ENCODE measurements at regions of chr15 and their contacts with region 1.

Region 1: DNA sequence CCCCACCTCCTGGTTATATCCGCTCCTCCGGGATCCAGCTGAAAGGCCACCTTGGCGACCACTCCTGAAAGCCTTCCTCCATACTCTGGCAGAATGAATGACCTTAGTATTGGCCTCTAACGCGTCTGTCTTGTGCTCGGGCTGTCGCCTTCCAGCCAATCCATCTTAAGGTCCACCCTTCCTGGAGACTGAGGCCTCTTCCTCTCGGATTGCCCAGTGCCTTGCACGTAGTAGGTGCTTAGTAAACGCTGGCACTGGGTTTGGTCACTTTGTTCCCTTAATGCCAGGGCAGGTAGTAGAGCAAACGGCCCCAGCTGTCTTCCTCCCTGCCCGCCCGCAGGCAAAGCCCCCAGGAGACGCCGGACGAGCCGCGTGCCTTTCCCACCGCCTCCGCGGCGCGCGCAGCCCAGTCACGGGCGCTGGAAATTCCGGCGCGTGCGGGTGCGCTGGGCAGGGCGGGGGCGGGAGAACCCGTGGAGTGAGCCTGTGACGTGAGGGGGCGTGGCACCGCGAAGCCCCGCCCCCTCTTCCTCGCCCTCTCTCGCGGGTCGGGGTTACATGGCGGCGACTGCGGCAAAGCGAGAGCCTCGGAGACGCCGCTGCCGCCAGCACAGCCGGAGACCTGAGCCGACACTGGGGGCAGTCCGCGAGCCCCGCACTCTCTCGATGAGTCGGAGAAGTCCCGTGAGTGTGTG is at the start of gene MAPK6:
- DNase-seq: peak; percentile 89 to 98 (median 92)
- ATAC-seq: peak; percentile 87
- H3K4me3 ChIP-seq: peak within 1 kb of the TSS; percentile 74 to 84
- H3K4me3 Mint-ChIP-seq: peak within 1 kb of the TSS; percentile 97
- H3K27ac ChIP-seq: peak within 1 kb of the TSS; percentile 74 to 84
- H3K27ac Mint-ChIP-seq: peak within 1 kb of the TSS; percentile 99
- H3K4me1 ChIP-seq: peaks cover 29% of the 10 kb centered on the region
- H3K4me1 Mint-ChIP-seq: peaks cover 35% of the 10 kb centered on the region
- H3K27me3 ChIP-seq: no peaks in the 10 kb centered on the region
- H3K27me3 Mint-ChIP-seq: no peaks in the 10 kb centered on the region
- CTCF ChIP-seq: no peak
- total RNA-seq, gene MAPK6: 39.8 to 42.5 TPM

Region 2: DNA sequence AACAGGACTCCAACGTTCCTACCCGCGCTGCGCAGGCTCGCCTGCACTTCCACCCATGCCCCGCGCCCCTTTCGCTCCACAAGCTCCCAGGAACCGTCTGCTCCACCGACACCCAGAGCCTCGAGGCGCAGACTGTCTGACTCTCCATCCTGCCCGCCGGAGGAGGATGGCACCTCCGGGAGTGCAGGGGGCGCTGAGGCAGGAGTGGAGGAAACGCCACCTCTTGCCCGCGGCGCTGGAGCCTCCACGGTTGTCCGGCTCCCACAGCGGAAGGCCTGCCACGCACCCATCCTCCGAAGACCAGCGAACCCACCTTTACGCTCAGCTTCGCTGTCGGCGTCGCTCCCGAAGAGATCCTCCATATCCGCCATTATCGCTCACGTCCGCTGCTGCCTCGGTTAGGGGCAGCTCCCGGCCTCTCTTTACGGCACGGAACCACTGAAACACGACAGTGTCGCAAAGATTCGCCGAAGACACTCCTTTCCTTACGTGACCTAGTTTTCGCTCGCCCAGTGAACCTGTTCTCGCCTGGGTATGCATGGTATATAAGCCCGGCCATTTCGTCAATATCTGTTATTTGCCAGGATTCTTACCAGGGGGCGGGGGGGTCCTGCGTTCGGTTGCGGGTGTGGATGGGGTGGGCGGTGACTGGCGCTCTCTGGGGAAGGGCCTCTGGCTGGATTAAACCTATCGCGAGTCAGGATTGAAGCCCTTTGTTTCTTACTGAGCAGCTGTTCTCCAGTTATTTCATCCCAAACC is 47.3 kb before region 1 on chr15 and contains the start of gene LEO1:
- CTCF ChIA-PET with region 1: no interaction called
- POLR2A ChIA-PET with region 1: interaction called, 20 read pairs
- intact Hi-C with region 1: loop called (anchors 1 kb)
- DNase-seq: peak; percentile 72 to 97 (median 88)
- ATAC-seq: peak; percentile 91
- H3K4me3 ChIP-seq: peak within 1 kb of the TSS; percentile 85 to 99
- H3K4me3 Mint-ChIP-seq: peak within 1 kb of the TSS; percentile 99
- H3K27ac ChIP-seq: peak within 1 kb of the TSS; percentile 69 to 87
- H3K27ac Mint-ChIP-seq: peak within 1 kb of the TSS; percentile 99
- H3K4me1 ChIP-seq: peaks cover 13% of the 10 kb centered on the region
- H3K4me1 Mint-ChIP-seq: peaks cover 21% of the 10 kb centered on the region
- H3K27me3 ChIP-seq: no peaks in the 10 kb centered on the region
- H3K27me3 Mint-ChIP-seq: no peaks in the 10 kb centered on the region
- CTCF ChIP-seq: peak; percentile 26
- total RNA-seq, gene LEO1: 9.4 TPM

Region 3: GRCh38 chr15:52039925-52040781 is 21.3 kb after region 1 on chr15:
- CTCF ChIA-PET with region 1: interaction called, 3 read pairs
- POLR2A ChIA-PET with region 1: interaction called, 19 read pairs
- intact Hi-C with region 1: loop called (anchors 1 to 2 kb)
- DNase-seq: no peak
- ATAC-seq: no peak
- H3K4me3 ChIP-seq: no peak overlapping the region
- H3K4me3 Mint-ChIP-seq: no peak overlapping the region
- H3K27ac ChIP-seq: peak overlapping the region in 1 of 2 experiments; percentile 24
- H3K27ac Mint-ChIP-seq: peak overlapping the region; percentile 69
- H3K4me1 ChIP-seq: peaks cover 31% of the 10 kb centered on the region
- H3K4me1 Mint-ChIP-seq: peaks cover 65% of the 10 kb centered on the region
- H3K27me3 ChIP-seq: no peaks in the 10 kb centered on the region
- H3K27me3 Mint-ChIP-seq: no peaks in the 10 kb centered on the region
- CTCF ChIP-seq: no peak

Region 4: GRCh38 chr15:52050416-52050815 is 31.6 kb after region 1 on chr15:
- CTCF ChIA-PET with region 1: interaction called, 10 read pairs
- POLR2A ChIA-PET with region 1: interaction called, 19 read pairs
- intact Hi-C with region 1: loop called (anchors 1 kb)
- DNase-seq: no peak
- ATAC-seq: no peak
- H3K4me3 ChIP-seq: no peak overlapping the region
- H3K4me3 Mint-ChIP-seq: no peak overlapping the region
- H3K27ac ChIP-seq: no peak overlapping the region
- H3K27ac Mint-ChIP-seq: no peak overlapping the region
- H3K4me1 ChIP-seq: peaks cover 10% of the 10 kb centered on the region
- H3K4me1 Mint-ChIP-seq: peaks cover 24% of the 10 kb centered on the region
- H3K27me3 ChIP-seq: no peaks in the 10 kb centered on the region
- H3K27me3 Mint-ChIP-seq: no peaks in the 10 kb centered on the region
- CTCF ChIP-seq: no peak

Region 5: DNA sequence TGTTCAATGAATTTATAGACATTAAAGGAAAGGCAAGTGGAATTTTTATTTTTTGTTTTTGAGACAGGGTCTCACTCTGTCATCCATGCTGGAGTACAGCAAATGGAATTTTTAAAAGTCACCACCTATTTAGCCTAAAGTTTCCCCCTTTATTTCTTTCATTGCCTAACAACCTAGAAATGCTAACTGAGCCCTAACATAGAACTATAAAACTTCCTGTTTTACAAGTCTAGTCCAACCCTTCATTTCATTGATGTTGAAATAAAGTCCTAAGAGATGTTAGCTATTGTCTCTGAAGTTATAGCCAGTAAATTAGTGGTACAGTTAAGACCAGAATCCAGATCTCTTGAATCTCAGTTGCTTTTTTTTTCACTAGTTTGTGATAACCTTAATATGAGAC is 39.2 kb after region 1 on chr15:
- CTCF ChIA-PET with region 1: no interaction called
- POLR2A ChIA-PET with region 1: no interaction called
- intact Hi-C with region 1: loop called in 1 of 2 experiments (anchors 5 kb)
- DNase-seq: no peak
- ATAC-seq: no peak
- H3K4me3 ChIP-seq: no peak overlapping the region
- H3K4me3 Mint-ChIP-seq: no peak overlapping the region
- H3K27ac ChIP-seq: no peak overlapping the region
- H3K27ac Mint-ChIP-seq: no peak overlapping the region
- H3K4me1 ChIP-seq: no peaks in the 10 kb centered on the region
- H3K4me1 Mint-ChIP-seq: peaks cover 1% of the 10 kb centered on the region
- H3K27me3 ChIP-seq: no peaks in the 10 kb centered on the region
- H3K27me3 Mint-ChIP-seq: no peaks in the 10 kb centered on the region
- CTCF ChIP-seq: no peak

Region 6: DNA sequence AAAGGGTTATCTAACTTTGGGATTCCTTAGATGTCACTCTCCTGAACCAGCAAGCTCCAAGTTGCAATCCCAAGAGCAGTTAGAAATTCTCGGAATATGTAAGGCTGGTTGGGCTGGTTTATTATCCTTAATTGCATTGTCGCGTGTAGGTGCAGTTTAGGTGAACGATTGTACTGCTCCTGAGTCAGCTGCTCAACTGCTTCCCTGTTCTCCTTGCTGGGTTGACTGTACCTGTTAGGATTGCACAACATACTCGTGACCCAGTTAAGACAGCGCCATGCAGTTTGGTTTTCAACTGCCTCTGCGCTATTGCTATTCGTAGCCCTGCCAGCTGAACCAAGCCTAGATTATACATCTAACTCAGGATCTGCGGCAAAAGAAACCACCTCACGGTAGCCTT is 52.7 kb after region 1 on chr15:
- CTCF ChIA-PET with region 1: no interaction called
- POLR2A ChIA-PET with region 1: no interaction called
- intact Hi-C with region 1: no loop called
- DNase-seq: no peak
- ATAC-seq: no peak
- H3K4me3 ChIP-seq: no peak overlapping the region
- H3K4me3 Mint-ChIP-seq: no peak overlapping the region
- H3K27ac ChIP-seq: no peak overlapping the region
- H3K27ac Mint-ChIP-seq: no peak overlapping the region
- H3K4me1 ChIP-seq: no peaks in the 10 kb centered on the region
- H3K4me1 Mint-ChIP-seq: peaks cover 12% of the 10 kb centered on the region
- H3K27me3 ChIP-seq: no peaks in the 10 kb centered on the region
- H3K27me3 Mint-ChIP-seq: peaks cover 2% of the 10 kb centered on the region
- CTCF ChIP-seq: no peak

Region 7: GRCh38 chr15:52568601-52569256 is 549.9 kb after region 1 on chr15 and contains the start of gene ARPP19:
- CTCF ChIA-PET with region 1: no interaction called
- POLR2A ChIA-PET with region 1: no interaction called
- intact Hi-C with region 1: loop called in 1 of 2 experiments (anchors 2 kb)
- DNase-seq: peak; percentile 56 to 90 (median 77)
- ATAC-seq: peak; percentile 72
- H3K4me3 ChIP-seq: peak within 1 kb of the TSS; percentile 66 to 74
- H3K4me3 Mint-ChIP-seq: peak within 1 kb of the TSS; percentile 94
- H3K27ac ChIP-seq: peak within 1 kb of the TSS; percentile 93 to 95
- H3K27ac Mint-ChIP-seq: peak within 1 kb of the TSS; percentile 99
- H3K4me1 ChIP-seq: peaks cover 29% of the 10 kb centered on the region
- H3K4me1 Mint-ChIP-seq: peaks cover 40% of the 10 kb centered on the region
- H3K27me3 ChIP-seq: no peaks in the 10 kb centered on the region
- H3K27me3 Mint-ChIP-seq: no peaks in the 10 kb centered on the region
- CTCF ChIP-seq: no peak
- total RNA-seq, gene ARPP19: 141 to 156 TPM

Measured in CD8-positive, alpha-beta T cell (primary cell).